ENCODE measurements at regions of chr6 and their contacts with region 1.

Region 1: DNA sequence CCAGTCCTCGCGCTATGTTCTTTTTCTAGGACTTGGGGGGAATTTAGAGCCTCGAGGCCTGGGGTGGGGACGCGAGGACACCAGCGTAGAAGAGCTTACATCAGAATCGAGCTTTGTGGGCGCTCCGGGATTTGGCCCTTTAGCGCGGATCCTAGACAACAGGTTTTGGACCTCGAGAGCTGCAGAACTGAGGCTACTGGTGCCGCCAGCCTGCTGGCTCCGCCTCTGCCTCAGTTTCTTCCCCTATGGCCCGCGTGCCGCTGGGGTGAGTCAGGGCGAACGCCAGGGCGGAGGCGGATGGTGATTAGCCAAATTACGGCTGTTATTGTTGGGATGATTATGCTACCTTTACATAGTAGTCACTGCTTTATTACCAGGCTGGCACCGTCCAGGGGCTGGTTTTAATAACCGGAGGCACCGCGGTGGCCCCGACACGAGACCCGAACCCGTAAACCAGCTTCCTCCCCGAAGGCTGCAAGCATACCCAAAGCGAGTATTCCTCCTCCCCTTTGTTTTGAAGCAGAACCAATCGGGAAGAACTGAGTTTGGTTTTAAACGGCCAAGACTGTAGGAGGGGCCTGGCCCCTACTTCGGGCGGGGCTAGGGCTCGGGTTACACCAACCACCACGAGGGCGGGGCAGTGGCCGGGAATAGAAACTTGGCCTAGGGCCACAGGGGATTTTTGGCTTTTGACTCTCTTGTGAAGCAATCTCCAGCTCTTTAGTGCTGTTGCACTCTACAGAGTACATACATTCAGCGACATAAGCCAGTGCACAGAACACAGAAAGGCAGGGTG is 639 bp upstream of the GTPBP2 start:
- DNase-seq: peak; percentile 65 to 96 (median 82)
- ATAC-seq: peak; percentile 58
- H3K4me3 ChIP-seq: peak overlapping the region; percentile 92
- H3K4me3 Mint-ChIP-seq: peak overlapping the region; percentile 98
- H3K27ac ChIP-seq: peak overlapping the region; percentile 86 to 90
- H3K27ac Mint-ChIP-seq: peak overlapping the region; percentile 94
- H3K4me1 ChIP-seq: peaks cover 40% of the 10 kb centered on the region
- H3K4me1 Mint-ChIP-seq: peaks cover 41% of the 10 kb centered on the region
- H3K27me3 ChIP-seq: no peaks in the 10 kb centered on the region
- H3K27me3 Mint-ChIP-seq: no peaks in the 10 kb centered on the region
- CTCF ChIP-seq: no peak

Region 2: GRCh38 chr6:43053545-43054205 is 576.0 kb before region 1 on chr6 and contains the start of gene CUL7:
- CTCF ChIA-PET with region 1: no interaction called
- POLR2A ChIA-PET with region 1: no interaction called
- intact Hi-C with region 1: loop called in 1 of 2 experiments (anchors 5 kb)
- DNase-seq: peak; percentile 78 to 95 (median 89)
- ATAC-seq: peak; percentile 99
- H3K4me3 ChIP-seq: peak within 1 kb of the TSS; percentile 93
- H3K4me3 Mint-ChIP-seq: peak within 1 kb of the TSS; percentile 98
- H3K27ac ChIP-seq: peak within 1 kb of the TSS; percentile 76 to 84
- H3K27ac Mint-ChIP-seq: peak within 1 kb of the TSS; percentile 96
- H3K4me1 ChIP-seq: peaks cover 45% of the 10 kb centered on the region
- H3K4me1 Mint-ChIP-seq: peaks cover 59% of the 10 kb centered on the region
- H3K27me3 ChIP-seq: no peaks in the 10 kb centered on the region
- H3K27me3 Mint-ChIP-seq: no peaks in the 10 kb centered on the region
- CTCF ChIP-seq: no peak
- total RNA-seq, gene CUL7: 5.9 to 6.9 TPM

Region 3: GRCh38 chr6:43369174-43370022 is 260.3 kb before region 1 on chr6 and contains the start of gene ZNF318:
- CTCF ChIA-PET with region 1: no interaction called
- POLR2A ChIA-PET with region 1: interaction called, 4 read pairs
- intact Hi-C with region 1: loop called in 1 of 2 experiments (anchors 2 kb)
- DNase-seq: peak; percentile 88 to 99 (median 92)
- ATAC-seq: peak; percentile 95
- H3K4me3 ChIP-seq: peak within 1 kb of the TSS; percentile 77
- H3K4me3 Mint-ChIP-seq: peak within 1 kb of the TSS; percentile 96
- H3K27ac ChIP-seq: peak within 1 kb of the TSS; percentile 76 to 85
- H3K27ac Mint-ChIP-seq: peak within 1 kb of the TSS; percentile 95
- H3K4me1 ChIP-seq: peaks cover 38% of the 10 kb centered on the region
- H3K4me1 Mint-ChIP-seq: peaks cover 49% of the 10 kb centered on the region
- H3K27me3 ChIP-seq: no peaks in the 10 kb centered on the region
- H3K27me3 Mint-ChIP-seq: no peaks in the 10 kb centered on the region
- CTCF ChIP-seq: no peak
- total RNA-seq, gene ZNF318: 20.4 TPM

Region 4: DNA sequence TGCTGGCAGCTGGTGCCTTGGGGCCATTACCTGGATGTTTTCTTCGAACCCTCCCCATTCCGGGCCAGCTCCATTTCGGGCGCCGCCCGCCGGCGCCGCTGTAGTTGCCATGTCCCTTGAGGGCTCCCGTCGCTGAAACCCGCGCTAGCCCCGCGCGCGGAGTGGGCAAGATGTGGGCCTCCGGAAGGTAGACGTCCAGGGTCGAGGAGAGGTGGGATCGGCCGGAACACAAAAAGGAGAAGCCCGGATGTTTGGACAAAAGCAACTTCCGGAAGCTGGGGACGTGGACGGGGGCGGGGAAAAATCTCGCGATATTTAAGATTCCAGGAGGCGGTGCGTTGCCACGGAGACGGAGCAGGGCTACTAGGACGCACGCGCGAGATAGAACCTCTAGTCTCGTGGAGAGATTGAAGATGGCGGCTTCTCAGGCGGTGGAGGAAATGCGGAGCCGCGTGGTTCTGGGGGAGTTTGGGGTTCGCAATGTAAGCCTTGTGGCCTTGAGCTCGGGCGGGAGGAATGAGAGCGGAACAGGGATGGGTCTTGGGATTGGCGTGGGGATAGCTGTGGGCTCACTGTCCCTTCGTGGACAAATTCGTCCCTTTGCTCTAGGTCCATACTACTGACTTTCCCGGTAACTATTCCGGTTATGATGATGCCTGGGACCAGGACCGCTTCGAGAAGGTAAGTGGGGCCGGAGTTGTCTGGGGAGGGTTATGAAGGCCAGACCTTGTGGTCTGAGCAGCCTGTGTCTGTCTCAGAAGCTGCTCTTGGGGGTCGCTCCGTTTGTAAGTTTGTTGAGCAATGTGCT is 112.8 kb before region 1 on chr6 and contains the starts of genes POLR1C and YIPF3:
- CTCF ChIA-PET with region 1: no interaction called
- POLR2A ChIA-PET with region 1: interaction called, 4 read pairs
- intact Hi-C with region 1: loop called in 1 of 2 experiments (anchors 5 kb)
- DNase-seq: peak; percentile 91 to 98 (median 96)
- ATAC-seq: peak; percentile 96
- H3K4me3 ChIP-seq: peak within 1 kb of the TSS; percentile 100
- H3K4me3 Mint-ChIP-seq: no peak within 1 kb of the TSS
- H3K27ac ChIP-seq: peak within 1 kb of the TSS; percentile 81 to 90
- H3K27ac Mint-ChIP-seq: no peak within 1 kb of the TSS
- H3K4me1 ChIP-seq: peaks cover 43% of the 10 kb centered on the region
- H3K4me1 Mint-ChIP-seq: peaks cover 33% of the 10 kb centered on the region
- H3K27me3 ChIP-seq: no peaks in the 10 kb centered on the region
- H3K27me3 Mint-ChIP-seq: no peaks in the 10 kb centered on the region
- CTCF ChIP-seq: no peak
- total RNA-seq, gene POLR1C: 46.6 to 47.8 TPM
- total RNA-seq, gene YIPF3: 36.5 to 37.9 TPM

Region 5: GRCh38 chr6:43644931-43645612 is 15.4 kb after region 1 on chr6 and contains the start of gene RSPH9:
- CTCF ChIA-PET with region 1: no interaction called
- POLR2A ChIA-PET with region 1: interaction called, 10 read pairs
- intact Hi-C with region 1: no loop called
- DNase-seq: peak; percentile 29 to 81 (median 53)
- ATAC-seq: peak; percentile 86
- H3K4me3 ChIP-seq: peak within 1 kb of the TSS; percentile 55
- H3K4me3 Mint-ChIP-seq: peak within 1 kb of the TSS; percentile 86
- H3K27ac ChIP-seq: no peak within 1 kb of the TSS
- H3K27ac Mint-ChIP-seq: peak within 1 kb of the TSS; percentile 67
- H3K4me1 ChIP-seq: peaks cover 15% of the 10 kb centered on the region
- H3K4me1 Mint-ChIP-seq: peaks cover 40% of the 10 kb centered on the region
- H3K27me3 ChIP-seq: no peaks in the 10 kb centered on the region
- H3K27me3 Mint-ChIP-seq: no peaks in the 10 kb centered on the region
- CTCF ChIP-seq: no peak
- total RNA-seq, gene RSPH9: not detected

Region 6: GRCh38 chr6:44246663-44247337 is 617.1 kb after region 1 on chr6 and contains the start of gene HSP90AB1:
- CTCF ChIA-PET with region 1: no interaction called
- POLR2A ChIA-PET with region 1: interaction called, 16 read pairs
- intact Hi-C with region 1: no loop called
- DNase-seq: peak; percentile 91 to 99 (median 94)
- ATAC-seq: peak; percentile 83
- H3K4me3 ChIP-seq: peak within 1 kb of the TSS; percentile 70
- H3K4me3 Mint-ChIP-seq: peak within 1 kb of the TSS; percentile 96
- H3K27ac ChIP-seq: peak within 1 kb of the TSS; percentile 92 to 98
- H3K27ac Mint-ChIP-seq: peak within 1 kb of the TSS; percentile 93
- H3K4me1 ChIP-seq: peaks cover 37% of the 10 kb centered on the region
- H3K4me1 Mint-ChIP-seq: peaks cover 47% of the 10 kb centered on the region
- H3K27me3 ChIP-seq: no peaks in the 10 kb centered on the region
- H3K27me3 Mint-ChIP-seq: peaks cover 5% of the 10 kb centered on the region
- CTCF ChIP-seq: no peak
- total RNA-seq, gene HSP90AB1: 401 to 405 TPM